ENCODE measurements at regions of chr15 and their contacts with region 1.

Region 1: DNA sequence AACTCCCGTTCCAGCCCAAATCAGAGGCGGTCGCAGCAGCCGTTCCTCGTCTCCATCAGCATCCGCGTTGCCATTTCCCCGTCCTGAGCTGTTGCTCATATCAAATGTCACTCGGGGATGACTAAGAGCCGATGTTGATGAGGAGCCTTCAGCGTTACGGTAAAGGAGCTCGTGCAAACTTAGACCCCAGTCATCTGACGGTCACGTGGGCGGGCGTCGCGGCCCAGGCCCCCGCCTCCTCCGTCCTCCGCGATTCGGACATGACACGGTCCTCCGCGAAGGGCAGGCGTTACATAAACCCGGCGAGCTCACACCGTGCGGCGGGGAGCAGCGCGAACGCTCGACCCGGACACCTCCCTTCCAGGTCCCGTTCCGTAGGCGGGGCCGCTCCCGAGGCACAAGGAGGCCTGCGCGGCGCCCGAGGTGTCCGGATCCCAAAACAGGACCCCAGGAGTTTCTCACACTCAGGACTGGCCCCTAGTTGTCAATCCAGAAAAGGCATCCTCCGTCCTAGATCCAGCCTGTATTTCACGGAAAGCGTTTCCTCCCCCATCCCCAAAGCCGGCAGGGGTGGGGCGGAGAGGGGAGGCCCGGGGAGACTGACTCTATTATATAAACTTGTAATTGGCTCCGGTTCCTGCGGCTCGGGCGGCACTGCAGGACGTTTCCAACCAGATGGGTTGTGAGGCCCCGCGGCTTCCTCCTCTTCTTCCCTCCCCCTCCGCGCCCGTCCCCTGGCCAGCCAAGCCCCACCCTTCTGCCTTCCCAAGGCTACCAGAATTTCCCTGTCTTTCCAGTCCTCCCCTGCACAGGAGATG is 100.0 kb upstream of the IGF1R start:
- DNase-seq: peak; percentile 56
- H3K4me3 ChIP-seq: peak overlapping the region; percentile 16 to 57 (median 33)
- H3K27ac ChIP-seq: peak overlapping the region; percentile 63 to 88 (median 81)
- H3K4me1 ChIP-seq: peaks cover 0 to 22% (median 13%) of the 10 kb centered on the region in 4 donors
- H3K27me3 ChIP-seq: peaks cover 28% of the 10 kb centered on the region
- CTCF ChIP-seq: peak in 1 of 5 experiments; percentile 3
- EP300 ChIP-seq: no peak
- POLR2A ChIP-seq: no peak

Region 2: DNA sequence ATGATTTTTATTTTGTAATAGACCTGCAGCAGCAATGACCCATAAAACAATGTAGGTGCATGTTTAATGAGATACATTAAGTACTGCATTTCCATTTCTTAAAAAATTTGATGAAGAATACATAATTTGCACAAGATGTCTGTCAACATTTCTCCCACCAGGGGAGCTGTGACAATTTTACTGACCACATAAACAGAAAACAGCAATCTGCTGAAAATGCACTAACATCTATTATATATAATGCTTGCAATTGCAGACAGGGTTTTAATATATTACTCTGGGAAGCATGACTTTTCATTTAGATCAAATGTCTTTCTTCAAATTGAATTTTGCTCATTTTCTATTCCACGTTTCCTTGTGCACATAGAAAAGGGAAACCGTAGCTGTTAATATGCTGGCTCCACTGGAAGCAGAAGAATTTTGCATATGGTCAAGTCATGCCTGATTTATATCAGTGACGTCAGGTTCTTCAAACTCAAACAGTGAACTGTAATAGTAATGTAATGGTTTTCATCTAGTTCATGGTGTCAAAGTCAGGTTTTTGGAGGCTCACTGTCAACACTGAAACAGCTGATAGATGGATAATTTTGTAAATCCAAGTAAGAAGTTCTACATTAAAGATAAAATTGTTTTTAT is 20.1 kb after region 1 on chr15:
- in situ Hi-C with region 1: no loop called
- intact Hi-C with region 1: loop called (anchors 1 kb)
- DNase-seq: no peak
- H3K4me3 ChIP-seq: no peak overlapping the region
- H3K27ac ChIP-seq: no peak overlapping the region
- H3K4me1 ChIP-seq: no peaks in the 10 kb centered on the region
- H3K27me3 ChIP-seq: peaks cover 4% of the 10 kb centered on the region
- CTCF ChIP-seq: peak in 1 of 5 experiments; percentile 17
- EP300 ChIP-seq: no peak
- POLR2A ChIP-seq: no peak

Region 3: GRCh38 chr15:98626153-98626552 is 77.8 kb after region 1 on chr15:
- in situ Hi-C with region 1: no loop called
- intact Hi-C with region 1: no loop called
- DNase-seq: no peak
- H3K4me3 ChIP-seq: no peak overlapping the region
- H3K27ac ChIP-seq: no peak overlapping the region
- H3K4me1 ChIP-seq: no peaks in the 10 kb centered on the region
- H3K27me3 ChIP-seq: peaks cover 65% of the 10 kb centered on the region
- CTCF ChIP-seq: no peak
- EP300 ChIP-seq: no peak
- POLR2A ChIP-seq: no peak

Region 4: DNA sequence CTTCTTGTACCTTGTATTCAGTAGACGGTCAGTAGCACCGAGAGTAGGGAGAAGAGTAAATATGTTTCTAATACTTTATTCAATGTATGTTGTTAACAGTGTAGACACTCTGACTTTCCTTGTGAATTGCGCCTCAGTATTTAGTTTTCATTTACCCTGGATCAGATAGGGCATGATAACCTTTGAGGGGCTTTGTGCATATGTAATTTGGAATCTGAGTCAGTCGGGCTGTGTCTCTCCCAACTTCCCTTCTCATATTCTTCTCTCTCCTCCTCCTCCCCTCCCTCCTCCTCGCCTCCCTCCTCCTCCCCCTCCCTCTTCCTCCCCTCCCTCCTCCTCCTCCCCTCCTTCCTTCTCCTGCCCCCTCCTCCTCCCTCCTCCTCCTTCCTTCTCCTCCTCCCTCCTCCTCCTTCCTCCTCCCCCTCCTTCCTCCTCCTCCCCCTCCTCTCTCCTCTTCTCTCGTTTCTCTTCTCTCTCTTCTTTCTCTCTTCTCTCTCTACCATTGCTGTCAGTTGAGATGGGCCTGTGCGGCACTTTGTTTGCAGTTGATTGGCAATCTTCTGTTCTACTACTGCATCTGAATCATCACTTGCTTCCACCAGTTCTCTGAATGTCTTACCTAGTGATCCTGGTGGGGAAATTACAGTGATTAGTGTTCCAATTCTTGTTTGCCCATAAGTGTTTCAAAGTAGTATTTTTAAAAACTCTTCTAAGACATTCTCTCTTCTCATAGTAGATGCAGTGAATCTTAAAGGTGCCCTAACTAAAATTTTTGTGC is 296.9 kb after region 1 on chr15:
- in situ Hi-C with region 1: loop called in 1 of 4 experiments (anchors 25 kb)
- intact Hi-C with region 1: no loop called
- DNase-seq: no peak
- H3K4me3 ChIP-seq: no peak overlapping the region
- H3K27ac ChIP-seq: no peak overlapping the region
- H3K4me1 ChIP-seq: peaks cover 4 to 22% (median 18%) of the 10 kb centered on the region in 4 donors
- H3K27me3 ChIP-seq: no peaks in the 10 kb centered on the region
- CTCF ChIP-seq: no peak
- EP300 ChIP-seq: no peak
- POLR2A ChIP-seq: no peak

Region 5: GRCh38 chr15:99187936-99188335 is 639.6 kb after region 1 on chr15:
- in situ Hi-C with region 1: no loop called
- intact Hi-C with region 1: no loop called
- DNase-seq: no peak
- H3K4me3 ChIP-seq: no peak overlapping the region
- H3K27ac ChIP-seq: no peak overlapping the region
- H3K4me1 ChIP-seq: peaks cover 0 to 3% (median 0%) of the 10 kb centered on the region in 4 donors
- H3K27me3 ChIP-seq: no peaks in the 10 kb centered on the region
- CTCF ChIP-seq: no peak
- EP300 ChIP-seq: no peak
- POLR2A ChIP-seq: no peak

Measured in transverse colon (tissue), 4 donors.